Activated naive CD4-positive, alpha-beta T cell treated with anti-CD3 and anti-CD28 coated beads for 36 hours (primary cell): ENCODE measurements at regions of chr17 and their contacts with region 1.

Region 1: GRCh38 chr17:15999439-16000350 is at the starts of genes TTC19 and ZSWIM7:
- DNase-seq: peak; percentile 93
- H3K4me3 Mint-ChIP-seq: peak within 1 kb of the TSS; percentile 98
- H3K27ac Mint-ChIP-seq: peak within 1 kb of the TSS; percentile 92
- H3K4me1 Mint-ChIP-seq: peaks cover 23% of the 10 kb centered on the region
- H3K27me3 Mint-ChIP-seq: no peaks in the 10 kb centered on the region
- total RNA-seq, gene TTC19: 18.8 to 20.8 TPM
- total RNA-seq, gene ZSWIM7: 8.3 to 10.8 TPM

Region 2: DNA sequence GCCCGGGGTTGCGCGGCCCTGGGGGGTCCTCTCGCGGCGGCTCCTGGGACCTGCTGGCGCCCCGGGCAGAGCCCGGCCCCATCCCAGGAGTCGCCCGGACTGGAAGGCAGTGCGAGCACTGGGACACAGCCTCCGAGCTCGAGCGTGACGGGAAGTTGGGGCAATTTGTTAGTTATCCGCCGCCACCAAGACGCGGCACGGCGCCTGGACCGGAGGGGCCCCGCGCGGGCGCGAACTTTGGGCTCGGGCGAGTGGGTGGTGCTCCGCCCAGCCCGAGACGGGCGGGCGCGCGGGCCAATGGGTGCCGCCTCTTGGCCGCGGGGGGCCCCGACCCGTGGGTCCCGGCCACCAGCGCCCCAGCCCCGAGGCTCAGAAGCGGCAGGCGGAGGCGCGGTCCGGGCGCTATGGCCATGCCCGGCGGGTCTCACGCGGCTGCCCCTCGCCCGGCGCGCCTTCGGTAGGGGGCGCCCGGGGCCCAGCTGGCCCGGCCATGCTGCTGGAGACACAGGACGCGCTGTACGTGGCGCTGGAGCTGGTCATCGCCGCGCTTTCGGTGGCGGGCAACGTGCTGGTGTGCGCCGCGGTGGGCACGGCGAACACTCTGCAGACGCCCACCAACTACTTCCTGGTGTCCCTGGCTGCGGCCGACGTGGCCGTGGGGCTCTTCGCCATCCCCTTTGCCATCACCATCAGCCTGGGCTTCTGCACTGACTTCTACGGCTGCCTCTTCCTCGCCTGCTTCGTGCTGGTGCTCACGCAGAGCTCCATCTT is 54.8 kb before region 1 on chr17 and contains the start of gene ADORA2B:
- CTCF ChIA-PET with region 1: interaction called, 26 read pairs
- intact Hi-C with region 1: loop called (anchors 1 kb)
- DNase-seq: peak; percentile 54
- H3K4me3 Mint-ChIP-seq: peak within 1 kb of the TSS; percentile 73
- H3K27ac Mint-ChIP-seq: no peak within 1 kb of the TSS
- H3K4me1 Mint-ChIP-seq: peaks cover 9% of the 10 kb centered on the region
- H3K27me3 Mint-ChIP-seq: peaks cover 43% of the 10 kb centered on the region
- total RNA-seq, gene ADORA2B: 0.12 TPM in 1 of 2 experiments, not detected in the other

Region 3: DNA sequence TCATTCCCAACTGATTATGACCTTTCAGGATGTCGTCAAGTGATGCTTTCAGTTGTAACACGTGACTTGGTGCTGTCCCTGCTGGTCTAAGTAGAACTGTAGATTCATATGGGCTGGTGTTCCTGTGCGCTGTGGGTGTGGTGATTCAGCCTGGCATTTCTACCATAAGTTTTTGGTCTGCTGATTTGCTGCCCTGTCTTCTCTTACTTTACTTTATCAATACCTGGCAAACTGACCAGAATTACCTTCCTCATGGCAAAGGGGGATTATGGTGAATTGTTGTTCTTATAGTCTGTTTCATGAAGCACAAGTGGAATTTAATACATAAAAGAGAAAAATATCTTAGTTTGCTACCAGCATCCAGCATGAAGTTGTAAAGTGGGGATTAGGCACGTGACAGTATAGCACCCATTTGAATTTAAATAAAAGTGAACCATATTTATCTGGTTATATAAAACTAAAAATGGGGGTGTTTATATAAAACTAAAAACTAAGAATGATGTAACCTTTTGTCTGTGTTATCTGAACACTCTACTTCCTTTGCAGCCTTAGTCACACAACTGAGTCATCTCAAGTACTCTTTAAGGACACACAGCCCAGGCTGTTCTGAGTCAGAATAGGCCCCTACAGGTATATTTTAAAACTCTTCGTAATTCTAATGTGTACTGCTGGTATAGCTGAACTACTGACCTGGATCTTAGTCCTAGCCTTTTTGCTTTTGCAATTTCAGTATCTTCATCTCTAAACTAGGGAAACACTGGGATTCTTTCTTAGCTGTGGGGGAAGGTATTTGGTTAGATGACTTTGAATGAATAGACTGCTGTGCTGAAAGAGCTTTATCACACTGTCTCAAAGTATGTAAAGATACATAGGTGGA is 28.3 kb after region 1 on chr17:
- CTCF ChIA-PET with region 1: interaction called, 5 read pairs
- intact Hi-C with region 1: loop called (anchors 1 kb)
- DNase-seq: peak; percentile 82
- H3K4me3 Mint-ChIP-seq: peak overlapping the region; percentile 52
- H3K27ac Mint-ChIP-seq: peak overlapping the region; percentile 97
- H3K4me1 Mint-ChIP-seq: peaks cover 40% of the 10 kb centered on the region
- H3K27me3 Mint-ChIP-seq: no peaks in the 10 kb centered on the region

Region 4: DNA sequence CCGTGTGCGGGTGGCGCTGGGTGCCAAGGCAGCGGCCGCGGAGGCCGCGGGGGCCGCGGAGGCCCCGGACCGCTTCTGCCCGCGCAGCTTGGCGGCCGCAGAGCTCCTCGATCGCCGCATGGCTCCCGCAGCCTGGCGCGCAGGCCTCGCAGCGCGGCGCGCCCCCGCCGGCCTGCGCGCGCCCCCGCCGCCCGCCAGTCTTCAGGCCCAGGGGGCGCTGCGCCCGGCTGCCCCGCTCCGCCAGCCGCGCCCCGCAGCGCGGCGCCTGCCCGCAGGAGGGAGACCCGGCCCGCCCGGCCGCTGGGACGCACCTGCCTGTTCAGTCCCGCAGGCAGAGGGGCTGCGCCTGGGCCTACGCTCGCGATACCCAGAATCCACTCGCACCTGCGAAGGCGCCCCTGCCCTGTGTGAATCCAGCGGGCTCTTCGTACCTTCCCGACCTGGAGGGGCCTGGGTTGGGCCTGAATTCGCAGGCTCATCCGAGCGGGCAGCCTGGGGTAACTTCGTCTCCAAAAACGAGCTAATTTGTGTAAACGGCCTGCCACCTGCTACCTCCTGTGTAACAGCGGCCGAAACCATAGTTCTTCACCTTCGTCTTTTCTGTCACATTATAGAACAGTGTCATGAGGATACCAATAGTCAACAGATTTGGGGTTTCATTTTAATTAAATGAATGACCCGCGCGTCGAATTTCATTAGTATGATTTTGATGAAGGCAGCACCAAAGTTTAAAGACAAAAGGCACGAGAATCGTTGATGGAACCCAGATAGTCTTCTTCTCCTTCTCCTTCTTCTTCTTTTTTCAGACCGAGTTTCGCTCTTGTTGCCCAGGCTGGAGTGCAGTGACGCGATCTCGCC is 353.9 kb after region 1 on chr17 and contains the start of gene CENPV:
- CTCF ChIA-PET with region 1: no interaction called
- intact Hi-C with region 1: loop called (anchors 5 kb)
- DNase-seq: peak; percentile 62
- H3K4me3 Mint-ChIP-seq: peak within 1 kb of the TSS; percentile 96
- H3K27ac Mint-ChIP-seq: peak within 1 kb of the TSS; percentile 77
- H3K4me1 Mint-ChIP-seq: peaks cover 22% of the 10 kb centered on the region
- H3K27me3 Mint-ChIP-seq: no peaks in the 10 kb centered on the region
- total RNA-seq, gene CENPV: 117 to 121 TPM